Activated T-helper 1 cell treated with anti-CD3 and anti-CD28 coated beads, Interleukin-12 subunit alpha, Interleukin-12 subunit beta, Interleukin-2, Interleukin-4 antibody, amounts not matched to agents 30 ng/mL and 10 ng/mL and 1 ng/mL, durations not matched to agents 14 hours and 24 hours and 36 hours (primary cell): ENCODE measurements at regions of chr2 and their contacts with region 1.

Region 1: DNA sequence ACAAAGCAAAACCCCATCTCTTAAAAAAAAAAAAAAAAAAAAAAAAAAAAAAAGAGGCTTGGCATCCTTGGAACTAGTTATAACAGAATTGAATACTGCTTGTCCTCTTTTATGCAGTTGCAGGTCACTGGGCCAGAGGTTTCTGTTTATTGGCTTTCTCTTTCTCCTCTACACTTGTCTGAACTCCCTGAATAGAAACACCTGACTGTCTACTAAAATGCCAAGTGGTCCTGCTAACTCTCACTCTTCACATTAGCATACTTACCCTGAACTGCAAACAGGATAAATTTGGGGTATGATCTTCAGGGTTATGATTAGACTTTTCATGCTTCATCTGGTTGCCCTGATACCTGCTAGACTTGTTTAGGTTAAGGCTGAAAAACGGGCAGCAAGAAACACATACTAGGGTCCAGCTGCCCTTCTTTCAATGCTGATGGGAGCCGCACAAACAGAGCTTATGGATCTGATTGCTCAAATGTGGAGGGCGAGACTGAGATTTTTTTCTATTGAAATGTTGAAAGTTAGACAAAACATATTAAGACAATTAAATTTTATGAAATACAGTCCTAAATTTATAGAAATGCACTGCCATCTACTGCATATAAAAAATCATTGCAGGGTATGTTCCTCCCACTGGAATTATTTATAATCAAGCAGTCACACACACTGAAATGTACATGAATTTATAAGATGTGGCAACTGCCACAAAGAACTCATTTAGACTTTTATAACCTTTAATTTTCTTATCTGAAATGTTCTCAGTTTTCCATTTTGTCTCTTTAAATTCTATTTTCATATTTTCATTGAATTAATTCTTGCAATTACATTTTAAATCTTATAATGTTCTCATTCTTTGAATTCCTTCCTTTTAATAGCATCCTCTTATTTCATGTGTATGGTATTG is 40.8 kb downstream of the GTF3C3 start:
- DNase-seq: no peak
- H3K4me3 Mint-ChIP-seq: no peak overlapping the region
- H3K27ac Mint-ChIP-seq: no peak overlapping the region
- H3K4me1 Mint-ChIP-seq: no peaks in the 10 kb centered on the region
- H3K27me3 Mint-ChIP-seq: no peaks in the 10 kb centered on the region

Region 2: GRCh38 chr2:196291873-196292800 is 466.6 kb before region 1 on chr2:
- intact Hi-C with region 1: loop called (anchors 2 kb)
- DNase-seq: no peak
- H3K4me3 Mint-ChIP-seq: no peak overlapping the region
- H3K27ac Mint-ChIP-seq: no peak overlapping the region
- H3K4me1 Mint-ChIP-seq: peaks cover 52% of the 10 kb centered on the region
- H3K27me3 Mint-ChIP-seq: no peaks in the 10 kb centered on the region

Region 3: DNA sequence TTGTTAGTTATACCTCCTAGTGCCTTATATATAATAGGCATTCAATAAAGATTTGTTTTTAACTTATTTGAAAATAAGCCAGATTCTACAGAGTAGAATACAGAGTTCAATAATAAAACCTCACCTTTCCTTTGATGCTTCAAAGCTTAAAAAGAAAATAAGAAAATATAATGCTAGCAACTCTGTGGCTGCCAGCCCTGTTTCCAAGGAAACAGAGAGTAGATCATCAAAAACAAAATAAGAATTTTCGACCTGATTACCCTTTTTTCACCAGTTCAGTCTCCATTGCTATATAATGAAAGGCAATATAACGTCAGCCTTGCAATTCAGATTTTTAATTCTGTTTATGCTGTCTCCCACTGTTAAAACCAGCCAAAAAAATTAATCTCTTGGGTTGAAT is 176.7 kb after region 1 on chr2:
- intact Hi-C with region 1: no loop called
- DNase-seq: no peak
- H3K4me3 Mint-ChIP-seq: no peak overlapping the region
- H3K27ac Mint-ChIP-seq: no peak overlapping the region
- H3K4me1 Mint-ChIP-seq: no peaks in the 10 kb centered on the region
- H3K27me3 Mint-ChIP-seq: no peaks in the 10 kb centered on the region

Region 4: GRCh38 chr2:197986977-197987376 is 1228.3 kb after region 1 on chr2:
- intact Hi-C with region 1: no loop called
- DNase-seq: no peak
- H3K4me3 Mint-ChIP-seq: no peak overlapping the region
- H3K27ac Mint-ChIP-seq: no peak overlapping the region
- H3K4me1 Mint-ChIP-seq: no peaks in the 10 kb centered on the region
- H3K27me3 Mint-ChIP-seq: no peaks in the 10 kb centered on the region